ENCODE measurements at regions of chr7 and their contacts with region 1.

Region 1: GRCh38 chr7:5193880-5194279 is 3.8 kb downstream of the WIPI2 start:
- DNase-seq: peak in 1 of 10 donors; percentile 9

Region 2: DNA sequence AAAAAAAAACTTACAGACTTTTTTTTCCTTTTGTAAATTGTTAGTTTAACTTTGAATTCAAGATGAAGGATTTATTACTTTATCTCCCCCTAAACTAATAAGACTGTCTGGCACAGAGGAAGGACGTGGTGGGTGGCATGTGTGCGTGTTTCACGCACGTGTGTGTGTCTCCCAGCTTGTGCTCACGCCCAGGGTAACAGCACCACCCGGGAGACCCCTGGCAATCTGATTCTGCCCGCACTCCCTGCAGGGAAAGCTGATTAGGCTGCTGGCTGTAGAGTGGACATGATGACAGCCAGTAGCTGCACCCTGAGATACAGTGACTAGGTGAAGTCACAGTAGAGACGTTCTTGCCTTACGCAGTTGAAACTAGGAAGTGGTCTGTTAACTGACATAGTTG is 21.4 kb after region 1 on chr7:
- intact Hi-C with region 1: loop called (anchors 2 kb)
- DNase-seq: peak in 2 of 10 donors; percentile 27 to 29

Region 3: DNA sequence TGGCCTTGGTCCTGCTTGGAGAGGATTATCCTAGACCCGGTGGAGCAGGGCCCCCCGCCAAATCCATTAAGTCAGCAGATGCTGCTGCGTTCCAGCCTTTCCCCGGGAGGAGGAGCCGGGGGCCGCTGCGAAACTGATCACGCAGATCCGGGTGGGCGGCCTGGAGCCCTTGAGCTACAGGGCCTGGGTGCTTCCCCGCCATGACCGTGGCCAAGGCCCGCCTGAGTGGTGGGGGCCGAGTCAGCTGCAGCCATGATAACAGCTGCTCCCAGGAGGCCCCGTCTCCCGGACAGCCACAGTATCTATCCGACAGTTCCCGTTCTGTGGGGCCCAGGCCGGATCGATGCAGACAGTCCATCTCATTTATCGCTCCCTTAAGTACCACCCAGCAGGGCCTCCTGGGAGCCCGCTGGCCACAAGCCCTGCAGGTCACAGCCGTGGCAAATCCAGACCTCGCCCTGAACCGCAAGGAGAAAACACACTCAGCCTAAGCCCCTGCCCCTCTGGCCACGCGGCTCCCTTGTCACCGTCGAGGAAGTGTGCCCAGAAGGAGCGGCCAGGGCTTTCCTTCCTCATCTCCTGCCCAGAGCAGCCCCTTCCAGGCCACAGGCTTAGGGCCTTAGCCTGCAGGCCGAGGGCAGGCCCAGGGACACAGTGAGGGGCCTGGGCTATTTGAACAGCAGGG is 54.5 kb after region 1 on chr7:
- intact Hi-C with region 1: no loop called
- DNase-seq: no peak